ENCODE measurements at regions of chr15 and their contacts with region 1.

Region 1: DNA sequence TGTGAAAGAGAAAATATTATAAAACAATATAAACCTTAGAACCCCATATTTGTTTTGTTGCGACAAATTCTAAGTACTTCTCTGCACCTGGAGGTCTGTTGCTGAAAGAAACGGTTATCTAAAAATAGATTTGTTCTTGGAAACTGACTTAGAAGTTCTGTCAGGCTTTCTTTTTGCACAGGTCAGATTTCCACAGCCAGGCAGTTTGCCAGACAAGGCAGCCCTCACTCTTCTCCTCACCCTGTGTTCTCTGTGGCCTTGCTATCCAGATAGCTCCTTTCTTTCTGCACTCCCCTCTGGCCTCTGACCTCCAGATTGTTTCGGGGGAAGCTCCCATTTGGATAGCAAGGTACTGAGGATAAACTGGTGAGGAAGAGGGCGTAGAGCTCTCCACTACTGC is 413.3 kb upstream of the ONECUT1 start:
- DNase-seq: no peak
- ATAC-seq: no peak
- H3K4me3 Mint-ChIP-seq: no peak overlapping the region
- H3K27ac Mint-ChIP-seq: no peak overlapping the region
- H3K4me1 Mint-ChIP-seq: no peaks in the 10 kb centered on the region
- H3K27me3 Mint-ChIP-seq: peaks cover 12% of the 10 kb centered on the region

Region 2: DNA sequence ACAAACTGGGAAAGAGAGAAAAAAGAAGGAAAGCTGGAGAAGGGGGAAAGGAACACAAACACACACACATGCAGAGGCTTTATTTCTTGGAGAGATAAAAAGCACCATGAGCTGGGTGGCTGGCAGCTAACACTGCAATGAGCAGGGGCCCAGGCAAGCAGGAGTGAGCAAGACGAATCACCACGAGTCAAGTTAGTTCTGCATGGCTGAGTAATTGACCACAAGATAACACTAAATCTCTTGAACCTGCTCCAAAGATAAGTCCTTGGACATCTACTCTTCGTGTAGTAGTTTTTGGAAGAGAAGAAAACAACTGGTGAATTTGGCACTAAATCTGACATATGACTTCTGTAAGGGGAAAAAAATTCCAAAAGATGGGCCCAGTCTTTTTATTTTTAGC is 775.6 kb before region 1 on chr15:
- CTCF ChIA-PET with region 1: no interaction called
- POLR2A ChIA-PET with region 1: no interaction called
- intact Hi-C with region 1: no loop called
- DNase-seq: peak; percentile 54
- ATAC-seq: peak; percentile 82
- H3K4me3 Mint-ChIP-seq: no peak overlapping the region
- H3K27ac Mint-ChIP-seq: no peak overlapping the region
- H3K4me1 Mint-ChIP-seq: peaks cover 8% of the 10 kb centered on the region
- H3K27me3 Mint-ChIP-seq: no peaks in the 10 kb centered on the region

Region 3: GRCh38 chr15:52496776-52497470 is 706.5 kb before region 1 on chr15:
- CTCF ChIA-PET with region 1: no interaction called
- POLR2A ChIA-PET with region 1: no interaction called
- intact Hi-C with region 1: loop called in 1 of 2 experiments (anchors 10 kb)
- DNase-seq: peak; percentile 78
- ATAC-seq: peak; percentile 100
- H3K4me3 Mint-ChIP-seq: no peak overlapping the region
- H3K27ac Mint-ChIP-seq: no peak overlapping the region
- H3K4me1 Mint-ChIP-seq: peaks cover 19% of the 10 kb centered on the region
- H3K27me3 Mint-ChIP-seq: no peaks in the 10 kb centered on the region

Measured in activated CD4-positive, alpha-beta T cell treated with anti-CD3 and anti-CD28 coated beads for 36 hours (primary cell).